Lower leg skin (tissue), 4 donors: ENCODE measurements at regions of chr2 and their contacts with region 1.

Region 1: GRCh38 chr2:151525821-151526373 is 116.2 kb downstream of the RIF1 start:
- DNase-seq: no peak
- H3K4me3 ChIP-seq: no peak overlapping the region
- CTCF ChIP-seq: no peak
- POLR2A ChIP-seq: no peak

Region 2: DNA sequence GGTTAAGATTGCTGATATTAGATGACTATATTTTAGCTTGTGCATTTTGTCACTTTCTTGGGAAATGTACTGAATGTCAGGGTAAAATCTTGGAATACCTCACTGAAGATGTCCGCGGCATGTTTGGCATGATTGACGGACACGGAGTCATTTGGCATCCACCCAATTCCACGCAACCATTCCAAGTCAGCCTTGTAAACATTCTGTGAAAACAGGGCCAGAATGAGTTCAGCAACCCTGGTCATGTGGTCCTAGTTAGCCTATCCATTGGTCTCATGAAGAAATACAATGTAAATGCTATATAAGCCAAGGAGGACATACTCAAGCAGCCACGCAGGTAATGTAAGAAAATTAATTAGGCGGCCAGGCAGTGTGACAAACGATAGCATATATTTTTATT is 43.3 kb after region 1 on chr2:
- intact Hi-C with region 1: no loop called
- DNase-seq: peak in 1 of 2 donors; percentile 36
- H3K4me3 ChIP-seq: no peak overlapping the region
- CTCF ChIP-seq: no peak
- POLR2A ChIP-seq: no peak

Region 3: GRCh38 chr2:151862700-151863099 is 336.8 kb after region 1 on chr2:
- intact Hi-C with region 1: no loop called
- DNase-seq: no peak
- H3K4me3 ChIP-seq: no peak overlapping the region
- CTCF ChIP-seq: no peak
- POLR2A ChIP-seq: no peak

Region 4: GRCh38 chr2:153287110-153287801 is 1761.4 kb after region 1 on chr2:
- intact Hi-C with region 1: loop called (anchors 5 kb)
- DNase-seq: no peak
- H3K4me3 ChIP-seq: no peak overlapping the region
- CTCF ChIP-seq: no peak
- POLR2A ChIP-seq: no peak